MCF 10A (cell line): ENCODE measurements at regions of chr12 and their contacts with region 1.

Region 1: GRCh38 chr12:107461222-107461975 is 224.2 kb upstream of the PWP1 start:
- DNase-seq: peak; percentile 67
- H3K4me3 Mint-ChIP-seq: no peak overlapping the region
- H3K27ac Mint-ChIP-seq: peak overlapping the region; percentile 25
- H3K4me1 Mint-ChIP-seq: no peaks in the 10 kb centered on the region
- H3K27me3 Mint-ChIP-seq: no peaks in the 10 kb centered on the region
- CTCF ChIP-seq: no peak

Region 2: GRCh38 chr12:107515446-107515958 is 54.1 kb after region 1 on chr12:
- CTCF ChIA-PET with region 1: no interaction called
- POLR2A ChIA-PET with region 1: no interaction called
- intact Hi-C with region 1: loop called (anchors 10 kb)
- DNase-seq: peak; percentile 98
- H3K4me3 Mint-ChIP-seq: peak overlapping the region; percentile 21
- H3K27ac Mint-ChIP-seq: peak overlapping the region; percentile 89
- H3K4me1 Mint-ChIP-seq: peaks cover 26% of the 10 kb centered on the region
- H3K27me3 Mint-ChIP-seq: no peaks in the 10 kb centered on the region
- CTCF ChIP-seq: no peak

Region 3: GRCh38 chr12:107661830-107662229 is 200.4 kb after region 1 on chr12:
- CTCF ChIA-PET with region 1: no interaction called
- POLR2A ChIA-PET with region 1: no interaction called
- intact Hi-C with region 1: no loop called
- DNase-seq: no peak
- H3K4me3 Mint-ChIP-seq: no peak overlapping the region
- H3K27ac Mint-ChIP-seq: no peak overlapping the region
- H3K4me1 Mint-ChIP-seq: no peaks in the 10 kb centered on the region
- H3K27me3 Mint-ChIP-seq: peaks cover 7% of the 10 kb centered on the region
- CTCF ChIP-seq: no peak